Mammary epithelial cell (primary cell): ENCODE measurements at regions of chr1 and their contacts with region 1.

Region 1: DNA sequence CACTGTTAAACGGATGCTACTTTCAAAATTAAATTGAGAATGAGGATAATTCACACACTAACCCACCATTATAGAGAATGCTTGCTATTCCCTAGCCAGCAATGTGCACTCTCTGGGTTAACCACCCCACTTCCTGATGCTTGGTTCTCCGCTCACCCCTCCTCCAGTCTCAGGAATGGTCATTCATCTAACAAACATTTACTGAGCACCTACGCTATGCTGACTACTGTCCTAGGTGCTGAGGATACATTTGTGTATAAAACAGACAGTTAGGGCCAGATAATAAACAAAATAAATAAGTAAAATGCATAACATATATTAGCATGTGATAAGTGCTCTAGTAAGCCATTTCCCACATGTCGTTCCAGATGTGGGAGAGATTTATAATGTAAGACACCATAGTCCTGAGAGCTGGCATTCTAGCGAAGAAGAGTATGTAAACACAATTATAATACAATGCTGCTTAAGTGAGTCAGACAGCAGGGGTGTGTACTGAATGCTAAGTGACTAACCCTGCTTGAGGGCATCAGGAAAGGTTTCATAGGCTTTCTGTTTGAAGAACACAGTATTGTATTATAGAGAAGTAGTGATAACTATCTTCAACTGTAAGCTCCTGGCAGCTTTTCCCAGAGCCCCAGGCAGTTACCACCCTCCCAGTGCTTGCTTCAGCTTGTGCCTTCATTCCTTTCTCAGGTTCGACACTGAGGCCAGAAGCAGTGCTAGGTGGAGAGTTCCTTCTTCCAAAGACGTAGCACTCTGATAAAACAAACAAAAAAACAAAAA is 126.6 kb upstream of the CACHD1 start:
- DNase-seq: peak; percentile 99
- H3K4me3 ChIP-seq: peak overlapping the region in 2 of 3 experiments; percentile 13 to 36
- H3K27ac ChIP-seq: peak overlapping the region; percentile 97
- H3K4me1 ChIP-seq: peaks cover 32% of the 10 kb centered on the region
- H3K27me3 ChIP-seq: no peaks in the 10 kb centered on the region
- CTCF ChIP-seq: no peak

Region 2: GRCh38 chr1:64308866-64309265 is 34.4 kb before region 1 on chr1:
- CTCF ChIA-PET with region 1: no interaction called
- dilution Hi-C with region 1: no loop called
- in situ Hi-C with region 1: no loop called
- intact Hi-C with region 1: loop called (anchors 2 kb)
- DNase-seq: peak; percentile 73
- H3K4me3 ChIP-seq: no peak overlapping the region
- H3K27ac ChIP-seq: no peak overlapping the region
- H3K4me1 ChIP-seq: peaks cover 5% of the 10 kb centered on the region
- H3K27me3 ChIP-seq: no peaks in the 10 kb centered on the region
- CTCF ChIP-seq: no peak